ENCODE measurements at regions of chr5 and their contacts with region 1.

Region 1: DNA sequence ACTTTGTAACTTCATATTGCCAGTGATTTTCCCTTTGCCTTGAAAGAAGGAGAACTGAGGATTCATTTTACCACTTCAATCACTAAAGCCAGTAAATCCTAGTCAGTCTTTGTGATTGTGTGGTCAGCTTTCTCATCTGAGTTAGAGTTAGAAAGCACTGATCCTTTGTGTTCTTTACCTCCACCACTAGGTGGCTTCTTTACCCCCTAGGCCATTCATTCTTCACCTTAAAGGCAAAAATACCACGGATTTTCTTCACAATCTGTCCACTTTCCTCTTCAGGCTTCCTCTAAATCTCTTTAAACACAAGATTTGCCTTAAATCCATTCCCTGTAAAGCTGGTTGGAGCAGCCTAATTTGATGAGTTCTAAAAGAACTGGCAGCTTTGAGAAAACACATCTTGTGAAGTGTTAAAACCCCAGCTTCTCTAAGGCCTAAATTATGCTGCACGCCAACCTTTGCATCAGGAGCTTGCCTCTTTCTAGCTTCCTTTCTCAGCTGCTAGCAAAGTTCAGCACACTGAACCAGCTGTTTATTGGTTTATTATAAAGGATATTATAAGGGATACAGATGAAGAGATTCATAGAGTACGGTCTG is 20.4 kb downstream of the BDP1 start:
- H3K4me3 ChIP-seq: no peak overlapping the region
- H3K27ac ChIP-seq: peak overlapping the region; percentile 53; the same call in 1 of the 2 replicates
- H3K4me1 ChIP-seq: no peaks in the 10 kb centered on the region
- CTCF ChIP-seq: 0 out of 2 replicates have a peak, but pooled peaks have one; percentile 14

Region 2: GRCh38 chr5:71461360-71461759 is 14.5 kb before region 1 on chr5:
- CTCF ChIA-PET with region 1: interaction called, 18 read pairs
- POLR2A ChIA-PET with region 1: interaction called, 4 read pairs
- H3K4me3 ChIP-seq: no peak overlapping the region
- H3K27ac ChIP-seq: no peak overlapping the region
- H3K4me1 ChIP-seq: no peaks in the 10 kb centered on the region; the same call in 1 of the 2 replicates
- CTCF ChIP-seq: no peak

Region 3: DNA sequence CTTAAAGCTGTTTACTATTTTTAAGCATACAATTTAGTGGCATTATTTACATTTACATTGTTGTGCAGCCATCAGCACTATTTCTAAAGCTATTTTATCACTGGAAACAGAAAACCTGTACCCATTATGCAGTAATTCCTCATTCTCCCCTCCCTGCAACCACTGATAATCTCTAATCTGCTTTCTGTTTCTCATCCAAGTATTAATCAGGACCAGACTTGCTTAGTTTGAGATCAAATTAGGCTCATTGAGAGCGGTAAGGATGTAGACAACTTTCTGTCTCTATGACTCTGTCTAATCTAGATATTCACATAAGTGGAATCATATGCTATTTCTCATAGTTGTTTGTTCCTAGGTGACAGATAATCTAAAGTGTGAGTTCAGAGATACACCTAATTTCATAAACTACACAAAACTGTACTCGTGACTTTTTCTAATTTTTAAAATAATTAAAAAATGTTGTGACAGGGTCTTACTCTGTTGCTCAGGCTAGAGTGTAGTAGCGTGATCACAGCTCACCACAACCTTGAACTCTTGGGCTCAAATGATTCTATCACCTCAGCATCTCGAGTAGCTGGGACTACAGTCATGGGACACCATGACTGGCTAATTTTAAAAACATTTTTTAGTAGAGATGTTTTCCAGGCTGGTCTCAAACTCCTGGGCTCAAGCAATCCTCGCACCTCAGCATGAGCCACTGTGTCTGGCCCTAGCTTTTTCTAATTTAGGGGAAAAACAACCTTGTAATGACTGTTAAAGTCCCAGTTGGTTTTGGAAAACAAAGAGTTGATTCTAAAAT is 17.1 kb after region 1 on chr5:
- CTCF ChIA-PET with region 1: interaction called, 11 read pairs
- POLR2A ChIA-PET with region 1: no interaction called
- H3K4me3 ChIP-seq: no peak overlapping the region
- H3K27ac ChIP-seq: no peak overlapping the region
- H3K4me1 ChIP-seq: no peaks in the 10 kb centered on the region
- CTCF ChIP-seq: no peak

Region 4: DNA sequence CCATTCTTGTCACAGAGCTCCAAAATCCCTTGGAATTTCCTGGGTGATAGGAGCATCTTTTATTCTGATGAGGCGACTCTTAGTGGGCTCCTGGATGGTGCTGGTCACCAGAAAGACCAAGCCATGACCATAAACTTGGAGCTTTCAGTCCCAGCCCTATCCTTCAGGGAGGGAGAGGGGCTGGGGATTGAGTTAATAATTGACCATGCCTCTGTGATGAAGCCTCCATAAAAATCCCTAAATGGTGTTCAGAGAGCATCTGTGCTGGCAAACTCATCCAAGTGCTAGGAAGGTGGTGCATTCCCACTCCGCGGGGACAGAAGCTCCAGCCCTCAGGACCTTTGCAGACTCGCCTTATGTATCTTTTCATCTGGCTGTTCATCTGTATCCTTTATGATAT is 139.9 kb after region 1 on chr5:
- CTCF ChIA-PET with region 1: no interaction called
- POLR2A ChIA-PET with region 1: no interaction called
- H3K4me3 ChIP-seq: no peak overlapping the region
- H3K27ac ChIP-seq: no peak overlapping the region
- H3K4me1 ChIP-seq: no peaks in the 10 kb centered on the region
- CTCF ChIP-seq: no peak

Region 5: DNA sequence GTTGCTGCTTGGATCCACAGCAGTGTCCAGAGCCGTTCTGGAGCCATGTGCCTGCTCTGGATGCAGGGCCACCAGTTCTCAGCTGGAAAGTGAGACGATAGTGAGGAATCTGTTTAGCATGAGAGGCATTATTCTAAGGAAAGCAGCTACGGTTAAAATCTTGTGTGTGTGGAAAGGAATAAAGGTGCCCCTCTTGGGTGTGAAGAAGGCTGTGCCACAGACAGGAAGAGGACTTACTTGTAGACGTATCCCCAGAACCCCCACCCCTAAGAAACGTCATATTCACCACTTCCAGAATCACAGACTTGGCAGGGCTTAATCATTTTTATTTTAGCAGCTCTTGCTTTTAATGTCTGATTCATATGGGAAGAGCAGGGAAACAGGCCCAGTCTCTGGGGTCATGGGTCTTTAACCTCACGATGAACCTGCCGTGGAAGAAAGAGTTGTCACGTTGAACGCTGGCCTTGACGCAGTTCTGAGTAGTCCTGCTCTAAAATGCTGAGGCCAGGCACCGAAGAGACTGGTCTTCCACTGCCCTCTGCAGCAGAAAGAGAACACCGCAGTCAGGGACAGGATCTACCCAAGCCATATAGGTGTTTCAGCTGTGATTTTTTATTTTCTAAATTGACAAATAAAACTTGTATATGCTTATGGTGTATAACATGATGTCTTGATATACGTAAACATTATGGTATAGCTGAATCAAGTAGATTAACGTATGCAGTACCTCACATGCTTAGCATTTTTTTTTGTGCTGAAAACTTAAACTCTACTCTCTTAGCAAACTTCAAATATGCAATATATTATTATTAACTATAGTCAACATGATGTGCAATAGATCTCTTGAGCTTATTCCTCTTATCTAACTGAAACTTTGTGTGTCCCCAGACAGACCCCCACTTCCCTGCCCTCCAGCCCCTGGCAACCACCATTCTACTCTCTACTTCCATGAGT is 282.0 kb after region 1 on chr5:
- CTCF ChIA-PET with region 1: interaction called, 19 read pairs
- POLR2A ChIA-PET with region 1: interaction called, 3 read pairs
- H3K4me3 ChIP-seq: no peak overlapping the region
- H3K27ac ChIP-seq: no peak overlapping the region
- H3K4me1 ChIP-seq: no peaks in the 10 kb centered on the region
- CTCF ChIP-seq: peak; percentile 79

Measured in HEK293 (cell line).